Activated CD8-positive, alpha-beta T cell treated with anti-CD3 and anti-CD28 coated beads for 36 hours (primary cell): ENCODE measurements at regions of chr14 and their contacts with region 1.

Region 1: GRCh38 chr14:64503478-64504309 is at the start of gene ZBTB25:
- DNase-seq: peak; percentile 97
- ATAC-seq: peak; percentile 64
- H3K4me3 Mint-ChIP-seq: peak within 1 kb of the TSS; percentile 79
- H3K27ac Mint-ChIP-seq: peak within 1 kb of the TSS; percentile 99
- H3K4me1 Mint-ChIP-seq: peaks cover 31% of the 10 kb centered on the region
- H3K27me3 Mint-ChIP-seq: no peaks in the 10 kb centered on the region
- CTCF ChIP-seq: no peak
- total RNA-seq, gene ZBTB25: 58.6 to 58.8 TPM

Region 2: GRCh38 chr14:64465191-64465822 is 38.4 kb before region 1 on chr14 and contains the start of gene AKAP5:
- CTCF ChIA-PET with region 1: interaction called, 3 read pairs
- POLR2A ChIA-PET with region 1: interaction called, 11 read pairs
- intact Hi-C with region 1: no loop called
- DNase-seq: peak; percentile 70
- ATAC-seq: peak; percentile 85
- H3K4me3 Mint-ChIP-seq: peak within 1 kb of the TSS; percentile 71
- H3K27ac Mint-ChIP-seq: peak within 1 kb of the TSS; percentile 73
- H3K4me1 Mint-ChIP-seq: peaks cover 39% of the 10 kb centered on the region
- H3K27me3 Mint-ChIP-seq: no peaks in the 10 kb centered on the region
- CTCF ChIP-seq: no peak
- total RNA-seq, gene AKAP5: 1.3 to 1.6 TPM

Region 3: DNA sequence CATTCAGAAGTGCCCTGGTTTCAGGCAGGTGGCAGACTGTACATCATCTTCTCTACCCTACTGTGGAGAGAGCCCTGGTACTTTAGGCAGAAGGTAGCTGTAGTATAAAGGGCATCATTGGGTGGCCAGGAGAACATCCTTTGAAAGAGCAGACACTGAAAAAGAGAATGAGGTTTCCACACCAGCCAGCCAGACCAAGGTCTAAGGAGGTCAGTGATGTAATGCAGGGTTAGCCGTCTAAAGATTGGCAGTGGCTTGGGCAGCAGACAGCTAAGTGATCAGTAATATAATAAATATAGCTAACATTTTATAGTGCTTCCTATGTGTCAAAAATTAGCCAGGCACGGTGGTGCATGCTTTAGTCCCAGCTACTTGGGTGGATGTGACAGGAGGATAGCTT is 12.1 kb before region 1 on chr14:
- CTCF ChIA-PET with region 1: interaction called, 6 read pairs
- POLR2A ChIA-PET with region 1: interaction called, 19 read pairs
- intact Hi-C with region 1: no loop called
- DNase-seq: no peak
- ATAC-seq: no peak
- H3K4me3 Mint-ChIP-seq: no peak overlapping the region
- H3K27ac Mint-ChIP-seq: no peak overlapping the region
- H3K4me1 Mint-ChIP-seq: peaks cover 51% of the 10 kb centered on the region
- H3K27me3 Mint-ChIP-seq: no peaks in the 10 kb centered on the region
- CTCF ChIP-seq: no peak

Region 4: DNA sequence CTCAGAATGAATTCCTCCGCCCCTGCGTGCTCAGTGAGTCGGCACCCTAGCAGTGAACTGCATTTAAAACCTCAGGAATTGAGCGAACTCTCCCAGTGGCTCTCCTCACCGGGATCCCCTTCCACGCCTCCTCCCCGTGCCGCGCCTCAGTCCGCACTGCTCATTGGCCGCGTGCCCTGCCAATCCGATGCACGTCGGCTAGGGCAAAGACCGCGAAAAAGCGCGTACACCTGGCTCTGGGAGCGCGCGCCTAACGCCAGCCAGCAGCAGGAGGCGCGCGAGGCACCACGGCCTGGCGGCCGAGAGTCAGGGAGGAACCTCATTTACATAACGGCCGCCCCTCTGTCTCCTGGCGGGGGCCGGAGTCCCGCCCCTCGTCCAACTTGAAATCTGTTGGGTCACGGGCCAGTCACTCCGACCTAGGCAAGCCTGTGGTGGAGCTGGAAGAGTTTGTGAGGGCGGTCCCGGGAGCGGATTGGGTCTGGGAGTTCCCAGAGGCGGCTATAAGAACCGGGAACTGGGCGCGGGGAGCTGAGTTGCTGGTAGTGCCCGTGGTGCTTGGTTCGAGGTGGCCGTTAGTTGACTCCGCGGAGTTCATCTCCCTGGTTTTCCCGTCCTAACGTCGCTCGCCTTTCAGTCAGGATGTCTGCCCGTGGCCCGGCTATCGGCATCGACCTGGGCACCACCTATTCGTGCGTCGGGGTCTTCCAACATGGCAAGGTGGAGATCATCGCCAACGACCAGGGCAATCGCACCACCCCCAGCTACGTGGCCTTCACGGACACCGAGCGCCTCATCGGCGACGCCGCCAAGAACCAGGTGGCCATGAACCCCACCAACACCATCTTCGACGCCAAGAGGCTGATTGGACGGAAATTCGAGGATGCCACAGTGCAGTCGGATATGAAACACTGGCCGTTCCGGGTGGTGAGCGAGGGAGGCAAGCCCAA is 36.8 kb after region 1 on chr14 and contains the start of gene HSPA2:
- CTCF ChIA-PET with region 1: interaction called, 3 read pairs
- POLR2A ChIA-PET with region 1: interaction called, 7 read pairs
- intact Hi-C with region 1: loop called (anchors 5 kb)
- DNase-seq: peak; percentile 95
- ATAC-seq: peak; percentile 95
- H3K4me3 Mint-ChIP-seq: peak within 1 kb of the TSS; percentile 79
- H3K27ac Mint-ChIP-seq: peak within 1 kb of the TSS; percentile 97
- H3K4me1 Mint-ChIP-seq: peaks cover 29% of the 10 kb centered on the region
- H3K27me3 Mint-ChIP-seq: peaks cover 31% of the 10 kb centered on the region
- CTCF ChIP-seq: peak; percentile 60
- total RNA-seq, gene HSPA2: 2.9 to 3.6 TPM

Region 5: DNA sequence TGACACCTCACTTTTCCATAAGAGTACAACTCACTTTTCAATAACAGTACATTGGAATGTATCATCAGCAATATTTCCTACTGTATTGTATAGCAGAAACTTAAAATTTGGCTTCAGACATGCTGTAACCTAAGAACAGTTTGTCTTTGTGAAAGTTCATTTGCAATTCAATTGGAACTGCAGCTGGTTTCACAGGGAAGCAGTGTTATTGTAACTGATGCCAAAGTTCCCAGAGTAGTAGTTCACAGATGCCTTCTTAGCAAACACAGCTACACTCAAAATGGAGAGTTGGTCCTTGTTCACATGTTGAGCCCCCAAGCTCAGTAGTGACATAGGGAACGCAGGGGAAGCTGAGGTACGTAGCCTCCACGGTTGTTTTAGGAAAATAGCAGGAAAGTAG is 69.4 kb after region 1 on chr14:
- CTCF ChIA-PET with region 1: no interaction called
- POLR2A ChIA-PET with region 1: no interaction called
- intact Hi-C with region 1: no loop called
- DNase-seq: no peak
- ATAC-seq: no peak
- H3K4me3 Mint-ChIP-seq: no peak overlapping the region
- H3K27ac Mint-ChIP-seq: no peak overlapping the region
- H3K4me1 Mint-ChIP-seq: no peaks in the 10 kb centered on the region
- H3K27me3 Mint-ChIP-seq: peaks cover 1% of the 10 kb centered on the region
- CTCF ChIP-seq: no peak